Left cardiac atrium (tissue), 4 donors: ENCODE measurements at regions of chr20 and their contacts with region 1.

Region 1: GRCh38 chr20:44196271-44196670 is 9.3 kb upstream of the JPH2 start:
- DNase-seq: no peak
- ATAC-seq: no peak

Region 2: GRCh38 chr20:43767686-43768474 is 428.4 kb before region 1 on chr20:
- intact Hi-C with region 1: loop called in 1 of 2 experiments (anchors 10 kb)
- DNase-seq: no peak
- ATAC-seq: peak in 1 of 2 donors; percentile 72

Region 3: GRCh38 chr20:43844778-43845614 is 351.3 kb before region 1 on chr20:
- intact Hi-C with region 1: no loop called
- DNase-seq: peak; percentile 44
- ATAC-seq: peak; percentile 47 to 96

Region 4: DNA sequence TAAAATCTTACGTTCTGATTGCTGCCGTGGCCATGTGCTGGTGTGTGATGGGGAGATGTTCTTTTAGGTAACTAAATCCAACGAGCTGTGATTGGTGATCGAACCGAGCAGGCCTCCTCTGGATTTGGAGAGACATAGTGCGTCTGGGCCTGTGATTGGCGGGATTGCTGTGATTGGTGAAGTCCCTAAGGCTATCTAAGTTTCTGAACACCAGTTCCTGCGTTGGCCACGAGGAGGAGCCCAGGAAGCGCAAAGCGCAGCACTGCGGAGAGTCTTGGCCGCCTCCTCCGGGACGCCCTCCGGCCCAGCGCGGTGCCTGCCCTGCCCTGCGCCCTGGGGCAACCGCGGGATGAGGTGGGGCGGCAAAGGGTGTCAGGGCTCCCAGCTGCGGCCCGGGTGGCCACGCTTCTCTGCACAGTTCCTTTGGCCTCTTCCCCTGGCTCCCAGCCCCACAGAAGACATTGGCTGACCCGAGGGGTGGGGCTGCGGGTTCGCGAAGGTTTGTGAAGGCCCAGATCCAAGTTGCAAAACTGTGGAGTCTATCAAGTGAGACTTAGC is 192.3 kb after region 1 on chr20:
- intact Hi-C with region 1: no loop called
- DNase-seq: peak; percentile 69
- ATAC-seq: peak; percentile 64 to 86